Transverse colon (tissue), 4 donors: ENCODE measurements at regions of chr3 and their contacts with region 1.

Region 1: DNA sequence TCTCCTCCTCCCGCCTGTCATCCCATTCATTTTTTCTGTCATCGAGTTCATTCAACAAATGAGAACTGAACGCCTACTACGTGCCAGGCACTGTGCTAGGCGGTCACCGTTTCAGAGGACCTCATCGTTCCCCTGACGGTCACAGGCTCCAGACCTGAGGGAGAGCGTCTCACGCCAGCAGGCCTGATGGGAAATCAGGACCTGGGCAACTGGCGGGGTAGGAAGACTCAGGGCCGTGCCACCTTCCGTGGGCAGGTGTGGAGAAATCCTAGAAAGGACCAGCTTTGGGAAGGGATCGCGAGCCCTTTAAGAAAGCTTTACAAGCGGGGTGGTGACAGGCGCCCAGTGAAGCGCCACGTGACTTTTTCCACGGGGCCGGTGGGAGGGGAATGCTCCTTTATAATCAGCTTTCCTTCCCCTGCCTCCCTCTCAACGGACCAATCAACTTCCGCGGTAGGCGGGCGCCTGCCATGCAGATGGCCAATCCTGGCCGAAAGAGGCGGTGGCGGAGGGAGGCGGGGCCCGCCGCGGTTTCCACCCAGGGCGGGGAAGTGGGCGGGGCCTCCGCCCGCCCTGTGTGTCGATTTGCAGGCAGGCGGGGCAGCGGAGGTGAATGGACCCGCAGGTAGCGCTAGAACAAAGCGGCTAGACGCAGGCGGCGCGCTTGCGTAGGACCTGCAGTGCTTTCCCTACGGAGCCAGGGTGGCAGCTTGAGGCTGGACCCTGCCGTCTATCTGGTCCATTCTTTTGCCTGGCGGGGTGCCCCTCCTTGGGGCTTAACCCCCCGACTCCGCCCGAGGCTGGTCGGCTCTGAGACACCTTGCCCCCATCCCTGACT is 816 bp upstream of the DUSP7 start:
- DNase-seq: peak; percentile 100
- H3K4me3 ChIP-seq: peak overlapping the region; percentile 54 to 80 (median 76)
- H3K27ac ChIP-seq: peak overlapping the region; percentile 88 to 96 (median 92)
- H3K4me1 ChIP-seq: peaks cover 17 to 50% (median 40%) of the 10 kb centered on the region in 4 donors
- H3K27me3 ChIP-seq: no peaks in the 10 kb centered on the region
- CTCF ChIP-seq: peak in 1 of 5 experiments; percentile 24
- EP300 ChIP-seq: no peak
- POLR2A ChIP-seq: peak; percentile 36

Region 2: DNA sequence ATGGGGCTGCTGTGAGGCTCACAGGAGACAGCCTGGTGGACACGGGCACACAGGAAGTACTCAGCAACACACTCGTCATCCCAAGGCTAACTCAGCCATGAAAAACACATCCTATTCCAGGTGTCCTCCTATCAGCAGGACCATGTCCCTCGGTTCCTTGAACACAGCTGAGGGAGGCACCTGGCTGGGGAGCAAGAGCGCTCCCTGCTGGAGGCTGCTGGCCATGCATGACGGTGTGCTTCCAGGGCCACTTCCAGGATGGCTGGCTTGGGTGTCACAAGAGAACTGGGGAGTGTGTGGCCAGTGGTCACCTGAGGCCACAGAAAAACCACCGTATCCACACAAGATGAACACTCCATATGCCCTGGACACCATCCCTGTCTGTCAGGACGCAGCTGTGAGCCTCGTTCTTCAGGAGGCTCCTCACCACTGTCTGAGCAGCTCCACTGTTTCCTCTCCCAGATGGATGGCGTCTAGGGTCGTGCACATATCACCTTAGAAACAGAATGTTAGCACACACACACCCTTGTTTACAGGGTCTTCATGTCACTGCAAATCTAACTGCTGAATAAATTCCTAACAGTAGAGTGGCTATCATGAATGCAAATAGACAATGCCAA is 66.0 kb after region 1 on chr3:
- in situ Hi-C with region 1: no loop called
- intact Hi-C with region 1: loop called (anchors 5 kb)
- DNase-seq: peak; percentile 82
- H3K4me3 ChIP-seq: no peak overlapping the region
- H3K27ac ChIP-seq: no peak overlapping the region
- H3K4me1 ChIP-seq: peaks cover 0 to 8% (median 1%) of the 10 kb centered on the region in 4 donors
- H3K27me3 ChIP-seq: no peaks in the 10 kb centered on the region
- CTCF ChIP-seq: peak; percentile 89 to 94 (median 92)
- EP300 ChIP-seq: no peak
- POLR2A ChIP-seq: no peak